Panc1 (cell line): ENCODE measurements at regions of chr5 and their contacts with region 1.

Region 1: DNA sequence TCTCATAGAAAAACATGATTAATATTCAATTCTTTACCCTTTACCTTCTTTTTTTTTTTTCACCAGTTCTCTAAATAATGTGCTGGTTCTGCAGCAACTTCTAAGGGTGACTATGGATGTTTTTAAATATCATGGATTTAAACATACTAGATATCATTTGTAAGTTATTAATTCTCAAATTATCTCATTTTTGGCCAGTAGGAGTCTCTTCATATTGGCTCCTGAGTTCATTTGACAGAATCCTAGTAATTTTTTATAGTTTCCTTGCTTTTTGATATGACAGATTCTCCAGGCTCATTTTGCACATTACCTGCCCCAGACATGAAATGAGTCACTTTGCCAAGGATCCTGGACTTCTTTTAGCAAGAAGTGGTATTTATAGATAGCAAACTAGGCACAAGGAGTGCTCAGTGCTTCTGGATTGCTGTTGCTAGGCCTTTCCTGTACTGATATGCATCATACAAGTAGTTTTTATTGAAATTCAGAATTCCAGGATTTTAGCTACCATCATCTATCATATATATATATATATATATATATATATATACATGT is 201.3 kb upstream of the IL12B start:
- DNase-seq: no peak
- ATAC-seq: no peak
- H3K4me3 ChIP-seq: no peak overlapping the region
- H3K27ac ChIP-seq: no peak overlapping the region
- H3K4me1 ChIP-seq: no peaks in the 10 kb centered on the region
- H3K27me3 ChIP-seq: no peaks in the 10 kb centered on the region
- CTCF ChIP-seq: peak; percentile 15; the same call in 1 of the 2 replicates

Region 2: DNA sequence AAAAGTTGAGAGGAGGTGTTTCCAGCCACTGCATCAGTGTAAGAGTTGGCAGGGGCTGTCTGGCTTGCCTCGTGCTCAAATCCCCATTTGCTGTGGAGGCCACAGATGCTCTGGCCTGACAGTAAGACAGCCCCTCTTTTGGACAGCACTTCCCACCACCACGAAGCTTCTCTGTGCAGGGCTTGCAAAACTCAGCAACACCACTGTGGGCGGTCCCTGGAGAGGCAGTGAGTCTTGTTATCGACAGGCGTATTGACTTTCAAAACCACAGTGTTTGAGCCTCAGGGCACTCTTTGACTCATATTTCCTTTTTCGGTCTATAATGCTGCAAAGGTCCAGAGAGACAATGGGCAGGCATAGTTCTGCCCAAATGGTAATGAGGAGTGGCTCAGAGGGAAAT is 971.5 kb before region 1 on chr5:
- CTCF ChIA-PET with region 1: no interaction called
- POLR2A ChIA-PET with region 1: no interaction called
- in situ Hi-C with region 1: no loop called
- intact Hi-C with region 1: no loop called
- DNase-seq: no peak
- ATAC-seq: no peak
- H3K4me3 ChIP-seq: no peak overlapping the region
- H3K27ac ChIP-seq: no peak overlapping the region
- H3K4me1 ChIP-seq: no peaks in the 10 kb centered on the region
- H3K27me3 ChIP-seq: no peaks in the 10 kb centered on the region
- CTCF ChIP-seq: no peak

Region 3: DNA sequence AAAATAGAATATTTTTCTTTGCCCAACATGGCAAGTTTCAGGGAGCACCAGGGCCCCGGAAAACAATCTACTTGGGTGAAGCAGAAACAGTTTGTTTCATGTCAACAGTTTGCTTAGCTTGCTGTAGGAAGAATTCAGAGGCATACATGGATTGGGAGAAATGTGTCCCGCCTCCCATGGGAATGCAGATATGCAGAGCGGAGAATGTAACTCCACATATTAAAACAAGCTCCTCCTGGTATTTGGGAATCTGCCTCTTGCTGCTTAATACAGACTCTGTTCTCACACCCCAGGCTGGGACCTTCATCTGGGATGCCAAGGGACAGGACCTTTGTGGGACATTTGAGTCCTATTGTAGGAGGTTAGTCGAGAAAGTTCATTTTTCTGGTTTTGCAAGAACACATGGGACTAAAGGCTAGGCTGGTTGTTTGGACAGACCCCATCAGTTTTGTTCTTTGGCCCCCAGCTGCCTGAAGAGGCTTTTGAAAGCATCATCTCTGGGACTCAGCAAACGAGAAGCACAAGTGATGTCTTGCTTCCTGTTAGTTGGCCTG is 164.2 kb after region 1 on chr5:
- CTCF ChIA-PET with region 1: no interaction called
- POLR2A ChIA-PET with region 1: no interaction called
- in situ Hi-C with region 1: no loop called
- intact Hi-C with region 1: no loop called
- DNase-seq: no peak
- ATAC-seq: no peak
- H3K4me3 ChIP-seq: no peak overlapping the region
- H3K27ac ChIP-seq: no peak overlapping the region
- H3K4me1 ChIP-seq: no peaks in the 10 kb centered on the region
- H3K27me3 ChIP-seq: no peaks in the 10 kb centered on the region
- CTCF ChIP-seq: no peak

Region 4: DNA sequence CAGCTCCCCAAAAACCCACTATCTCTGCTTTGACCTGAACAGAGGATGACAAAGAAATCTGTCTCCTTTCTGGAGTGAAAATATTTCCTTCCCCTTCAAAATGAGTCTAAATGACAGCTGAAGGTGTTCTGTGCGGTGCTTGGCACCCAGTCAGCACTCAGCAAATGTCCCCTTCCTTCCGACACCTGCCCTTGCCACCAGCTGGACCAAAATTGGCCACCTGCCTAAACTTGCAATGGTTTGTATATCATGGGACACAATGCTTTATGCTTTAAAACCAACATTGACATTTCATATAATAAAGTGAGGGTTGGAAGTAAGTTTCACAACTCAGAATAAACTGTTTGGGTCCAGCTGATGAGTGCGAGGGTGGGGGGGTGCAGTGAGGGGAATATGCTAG is 469.8 kb after region 1 on chr5:
- CTCF ChIA-PET with region 1: no interaction called
- POLR2A ChIA-PET with region 1: interaction called, 13 read pairs
- in situ Hi-C with region 1: no loop called
- intact Hi-C with region 1: no loop called
- DNase-seq: no peak
- ATAC-seq: no peak
- H3K4me3 ChIP-seq: no peak overlapping the region
- H3K27ac ChIP-seq: no peak overlapping the region
- H3K4me1 ChIP-seq: no peaks in the 10 kb centered on the region
- H3K27me3 ChIP-seq: peaks cover 3% of the 10 kb centered on the region; the same call in 1 of the 2 replicates
- CTCF ChIP-seq: no peak

Region 5: GRCh38 chr5:160188142-160189015 is 656.7 kb after region 1 on chr5:
- CTCF ChIA-PET with region 1: no interaction called
- POLR2A ChIA-PET with region 1: no interaction called
- in situ Hi-C with region 1: no loop called
- intact Hi-C with region 1: no loop called
- DNase-seq: no peak
- ATAC-seq: peak; percentile 85
- H3K4me3 ChIP-seq: peak overlapping the region; percentile 38 to 55
- H3K27ac ChIP-seq: peak overlapping the region; percentile 85
- H3K4me1 ChIP-seq: peaks cover 5% of the 10 kb centered on the region
- H3K27me3 ChIP-seq: no peaks in the 10 kb centered on the region
- CTCF ChIP-seq: no peak